HCT116 (cell line): ENCODE measurements at regions of chr7 and their contacts with region 1.

Region 1: GRCh38 chr7:134432296-134433152 is 26.4 kb downstream of the AKR1B1 start:
- DNase-seq: peak; percentile 91
- ATAC-seq: peak; percentile 95
- H3K4me3 ChIP-seq: peak overlapping the region; percentile 32 to 48
- H3K27ac ChIP-seq: peak overlapping the region; percentile 44
- H3K4me1 ChIP-seq: peaks cover 6 to 16% of the 10 kb centered on the region in 2 experiments; a peak in 3 of 4 replicates
- H3K27me3 ChIP-seq: no peaks in the 10 kb centered on the region
- CTCF ChIP-seq: peak; percentile 66 to 98 (median 80)
- POLR2A ChIP-seq: peak; percentile 31
- RAD21 ChIP-seq: peak; percentile 98

Region 2: GRCh38 chr7:133504825-133505224 is 927.7 kb before region 1 on chr7:
- CTCF ChIA-PET with region 1: no interaction called
- POLR2A ChIA-PET with region 1: no interaction called
- RAD21 ChIA-PET with region 1: no interaction called
- intact Hi-C with region 1: no loop called
- DNase-seq: no peak
- ATAC-seq: no peak
- H3K4me3 ChIP-seq: no peak overlapping the region
- H3K27ac ChIP-seq: no peak overlapping the region
- H3K4me1 ChIP-seq: no peaks in the 10 kb centered on the region
- H3K27me3 ChIP-seq: no peaks in the 10 kb centered on the region
- CTCF ChIP-seq: no peak
- POLR2A ChIP-seq: no peak
- RAD21 ChIP-seq: no peak

Region 3: DNA sequence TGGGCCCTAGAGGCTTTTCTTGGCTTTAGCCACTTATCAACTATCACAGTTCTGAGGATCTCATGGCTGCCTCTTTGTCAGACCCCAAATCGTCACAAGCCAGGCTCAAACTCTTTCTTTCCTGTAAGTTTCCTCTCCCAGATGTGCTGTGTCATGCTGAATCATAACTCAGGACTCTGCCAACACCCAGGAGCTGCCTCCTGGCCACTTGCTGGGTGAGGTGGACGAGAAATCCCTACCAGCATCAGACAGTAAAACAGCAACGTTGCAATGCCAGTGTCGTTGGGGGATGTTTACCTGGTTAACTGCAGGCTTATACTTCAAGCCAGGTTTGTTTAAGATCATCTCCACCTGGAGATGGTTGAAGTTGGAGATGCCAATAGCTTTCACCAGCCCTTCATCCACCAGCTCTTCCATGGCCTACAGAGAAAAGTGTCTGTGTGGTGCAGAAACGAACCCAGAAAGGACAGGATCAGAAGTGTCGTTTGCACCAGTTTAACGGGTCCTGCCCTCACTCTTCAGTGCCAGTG is 16.2 kb after region 1 on chr7:
- CTCF ChIA-PET with region 1: interaction called, 19 read pairs
- POLR2A ChIA-PET with region 1: no interaction called
- RAD21 ChIA-PET with region 1: interaction called in 1 of 2 experiments, 4 read pairs
- intact Hi-C with region 1: no loop called
- DNase-seq: peak; percentile 21
- ATAC-seq: peak; percentile 39; the same call in 1 of the 2 replicates
- H3K4me3 ChIP-seq: peak overlapping the region in 1 of 2 experiments; percentile 2; a peak in 1 of 4 replicates
- H3K27ac ChIP-seq: no peak overlapping the region
- H3K4me1 ChIP-seq: peaks cover 5 to 24% of the 10 kb centered on the region in 2 experiments
- H3K27me3 ChIP-seq: no peaks in the 10 kb centered on the region
- CTCF ChIP-seq: no peak
- POLR2A ChIP-seq: no peak
- RAD21 ChIP-seq: no peak

Region 4: GRCh38 chr7:134514663-134515062 is 82.1 kb after region 1 on chr7:
- CTCF ChIA-PET with region 1: interaction called, 110 read pairs
- POLR2A ChIA-PET with region 1: interaction called, 9 read pairs
- RAD21 ChIA-PET with region 1: interaction called, 4 to 18 read pairs
- intact Hi-C with region 1: loop called (anchors 1 kb)
- DNase-seq: peak; percentile 83
- ATAC-seq: peak; percentile 62
- H3K4me3 ChIP-seq: no peak overlapping the region
- H3K27ac ChIP-seq: no peak overlapping the region
- H3K4me1 ChIP-seq: peaks cover 15 to 49% of the 10 kb centered on the region in 2 experiments
- H3K27me3 ChIP-seq: no peaks in the 10 kb centered on the region; the same call in 1 of the 2 replicates
- CTCF ChIP-seq: peak; percentile 73 to 86 (median 82)
- POLR2A ChIP-seq: no peak
- RAD21 ChIP-seq: peak; percentile 68

Region 5: DNA sequence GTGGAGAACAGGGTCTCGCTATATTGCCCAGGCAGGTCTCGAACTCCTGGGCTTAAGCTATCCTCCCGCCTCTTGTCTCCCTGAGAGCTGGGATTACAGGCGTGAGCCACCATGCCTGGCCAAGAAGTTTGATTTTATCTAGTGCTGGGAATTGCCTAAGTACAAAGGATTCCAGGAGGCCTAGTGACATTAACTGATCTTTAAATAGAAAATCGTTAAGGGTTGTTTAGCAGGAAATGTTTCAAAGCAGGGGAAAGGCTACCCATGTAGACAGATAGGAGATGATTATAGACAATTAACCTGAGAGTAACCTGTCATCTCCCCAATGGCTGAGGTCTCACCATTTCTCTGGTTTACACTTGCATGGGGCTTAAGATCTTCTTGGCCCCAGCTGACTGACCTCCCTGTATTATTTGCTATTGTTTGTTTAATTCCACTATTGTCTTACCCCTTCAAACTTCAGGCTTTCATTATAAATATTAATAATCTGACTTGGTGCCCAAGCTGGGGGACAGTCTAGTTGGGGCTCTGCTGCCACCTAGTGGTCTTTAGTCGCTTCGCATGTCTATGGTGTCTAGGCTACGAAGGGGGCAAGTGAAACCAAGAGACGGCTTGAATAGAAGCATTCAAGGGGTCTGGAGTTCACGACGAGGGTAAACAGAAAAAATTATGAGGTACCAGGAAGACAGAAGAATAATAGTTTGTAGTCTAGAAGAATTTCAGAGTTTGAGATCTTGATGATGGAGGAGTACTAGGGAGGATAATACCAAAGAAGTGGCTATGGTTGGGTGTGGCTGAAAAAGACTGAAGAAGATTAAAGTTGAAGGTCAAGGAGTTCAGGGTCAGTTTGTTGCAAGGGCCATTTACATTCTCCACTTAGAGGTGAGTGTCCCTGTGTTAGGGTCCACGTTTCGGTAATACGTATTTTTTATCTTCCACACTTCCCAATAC is 173.7 kb after region 1 on chr7:
- CTCF ChIA-PET with region 1: interaction called, 68 read pairs
- POLR2A ChIA-PET with region 1: interaction called, 5 read pairs
- RAD21 ChIA-PET with region 1: interaction called, 6 to 7 read pairs
- intact Hi-C with region 1: loop called (anchors 1 kb)
- DNase-seq: peak; percentile 34
- ATAC-seq: peak; percentile 99
- H3K4me3 ChIP-seq: peak overlapping the region; percentile 7 to 34; a peak in 1 of 4 replicates
- H3K27ac ChIP-seq: no peak overlapping the region
- H3K4me1 ChIP-seq: peaks cover 0 to 4% of the 10 kb centered on the region in 2 experiments; a peak in 1 of 4 replicates
- H3K27me3 ChIP-seq: peaks cover 5% of the 10 kb centered on the region; the same call in 1 of the 2 replicates
- CTCF ChIP-seq: peak; percentile 88 to 96 (median 89)
- POLR2A ChIP-seq: no peak
- RAD21 ChIP-seq: peak; percentile 93

Region 6: GRCh38 chr7:134943764-134944400 is 511.4 kb after region 1 on chr7:
- CTCF ChIA-PET with region 1: no interaction called
- POLR2A ChIA-PET with region 1: no interaction called
- RAD21 ChIA-PET with region 1: no interaction called
- intact Hi-C with region 1: loop called (anchors 10 kb)
- DNase-seq: peak; percentile 19
- ATAC-seq: peak; percentile 93
- H3K4me3 ChIP-seq: no peak overlapping the region
- H3K27ac ChIP-seq: no peak overlapping the region
- H3K4me1 ChIP-seq: no peaks in the 10 kb centered on the region
- H3K27me3 ChIP-seq: no peaks in the 10 kb centered on the region
- CTCF ChIP-seq: peak; percentile 40 to 78 (median 62); a peak in 5 of 6 replicates
- POLR2A ChIP-seq: no peak
- RAD21 ChIP-seq: peak; percentile 83